GM12878 (cell line): ENCODE measurements at regions of chrX and their contacts with region 1.

Region 1: GRCh38 chrX:54439967-54440871 is at the start of gene TSR2:
- DNase-seq: peak; percentile 60
- ATAC-seq: peak; percentile 98
- H3K4me3 ChIP-seq: peak within 1 kb of the TSS; percentile 62
- H3K27ac ChIP-seq: peak within 1 kb of the TSS; percentile 17; the same call in 1 of the 2 replicates
- H3K4me1 ChIP-seq: no peaks in the 10 kb centered on the region; the same call in 1 of the 2 replicates
- H3K27me3 ChIP-seq: no peaks in the 10 kb centered on the region
- CTCF ChIP-seq: peak in 1 of 3 experiments; percentile 15; a peak in 1 of 6 replicates
- EP300 ChIP-seq: no peak
- POLR2A ChIP-seq: peak; percentile 86
- RAD21 ChIP-seq: peak; percentile 38; the same call in 1 of the 2 replicates
- polyA plus RNA-seq, gene TSR2: 8.5 to 22.0 TPM

Region 2: DNA sequence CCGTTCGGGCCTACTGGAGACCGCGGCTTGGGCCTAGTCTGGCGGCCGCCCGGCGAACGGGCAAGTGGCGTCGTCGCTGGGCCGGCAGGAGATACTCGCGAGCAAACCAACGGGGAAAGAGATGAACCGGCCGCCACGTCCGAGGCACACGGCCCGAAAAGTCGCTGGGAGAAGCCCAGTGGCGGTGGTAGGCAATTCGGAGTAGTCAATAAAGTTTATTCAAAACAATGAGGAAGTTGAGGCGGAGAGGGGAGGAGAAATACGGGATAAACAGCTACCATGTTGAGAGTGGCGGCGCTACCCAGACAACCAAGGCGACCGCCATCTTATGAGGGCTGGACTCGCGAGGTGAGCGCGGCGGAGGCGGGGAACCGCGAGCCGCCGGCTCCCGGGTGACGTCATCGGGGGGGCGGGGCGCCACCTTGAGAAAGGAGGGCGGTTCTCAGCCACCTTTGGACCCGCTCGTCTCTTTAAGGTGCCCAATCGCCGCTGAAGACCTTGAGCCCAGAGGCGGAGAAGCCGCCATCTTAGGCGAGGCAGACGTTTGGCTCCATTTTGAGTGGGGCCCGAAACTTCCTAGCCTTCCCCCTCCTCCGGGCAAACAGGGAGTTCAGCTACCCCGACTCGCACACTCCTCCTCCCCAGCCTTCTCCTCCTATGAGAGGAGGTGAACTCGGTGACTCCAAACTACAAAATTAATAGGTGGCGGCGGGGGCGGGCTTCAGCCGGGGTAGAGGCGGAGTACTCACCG is 395.9 kb before region 1 on chrX and contains the start of gene PHF8:
- CTCF ChIA-PET with region 1: interaction called, 3 read pairs
- POLR2A ChIA-PET with region 1: no interaction called
- RAD21 ChIA-PET with region 1: interaction called, 3 read pairs
- SMC1A ChIA-PET with region 1: no interaction called
- in situ Hi-C with region 1: no loop called
- intact Hi-C with region 1: loop called (anchors 5 kb)
- DNase-seq: peak; percentile 77
- ATAC-seq: peak; percentile 91
- H3K4me3 ChIP-seq: peak within 1 kb of the TSS; percentile 80
- H3K27ac ChIP-seq: peak within 1 kb of the TSS; percentile 83
- H3K4me1 ChIP-seq: peaks cover 4% of the 10 kb centered on the region; the same call in 1 of the 2 replicates
- H3K27me3 ChIP-seq: no peaks in the 10 kb centered on the region
- CTCF ChIP-seq: no peak
- EP300 ChIP-seq: no peak
- POLR2A ChIP-seq: peak; percentile 58
- RAD21 ChIP-seq: no peak
- polyA plus RNA-seq, gene PHF8: 2.4 TPM

Region 3: GRCh38 chrX:54246866-54247265 is 193.4 kb before region 1 on chrX:
- CTCF ChIA-PET with region 1: no interaction called
- POLR2A ChIA-PET with region 1: no interaction called
- RAD21 ChIA-PET with region 1: no interaction called
- SMC1A ChIA-PET with region 1: no interaction called
- in situ Hi-C with region 1: no loop called
- intact Hi-C with region 1: no loop called
- DNase-seq: no peak
- ATAC-seq: no peak
- H3K4me3 ChIP-seq: no peak overlapping the region
- H3K27ac ChIP-seq: no peak overlapping the region
- H3K4me1 ChIP-seq: no peaks in the 10 kb centered on the region
- H3K27me3 ChIP-seq: no peaks in the 10 kb centered on the region; a peak in 1 of 4 replicates
- CTCF ChIP-seq: no peak
- EP300 ChIP-seq: no peak
- POLR2A ChIP-seq: no peak
- RAD21 ChIP-seq: no peak

Region 4: GRCh38 chrX:54427837-54428424 is 12.3 kb before region 1 on chrX:
- CTCF ChIA-PET with region 1: interaction called, 3 read pairs
- POLR2A ChIA-PET with region 1: interaction called, 10 read pairs
- RAD21 ChIA-PET with region 1: interaction called, 5 read pairs
- SMC1A ChIA-PET with region 1: interaction called, 3 read pairs
- in situ Hi-C with region 1: no loop called
- intact Hi-C with region 1: no loop called
- DNase-seq: no peak
- ATAC-seq: no peak
- H3K4me3 ChIP-seq: no peak overlapping the region
- H3K27ac ChIP-seq: no peak overlapping the region
- H3K4me1 ChIP-seq: no peaks in the 10 kb centered on the region; the same call in 1 of the 2 replicates
- H3K27me3 ChIP-seq: no peaks in the 10 kb centered on the region
- CTCF ChIP-seq: no peak
- EP300 ChIP-seq: no peak
- POLR2A ChIP-seq: no peak
- RAD21 ChIP-seq: no peak

Region 5: GRCh38 chrX:54529552-54530357 is 89.5 kb after region 1 on chrX and contains the start of gene GNL3L:
- CTCF ChIA-PET with region 1: no interaction called
- POLR2A ChIA-PET with region 1: interaction called, 4 read pairs
- RAD21 ChIA-PET with region 1: no interaction called
- SMC1A ChIA-PET with region 1: no interaction called
- in situ Hi-C with region 1: no loop called
- intact Hi-C with region 1: loop called (anchors 1 kb)
- DNase-seq: peak; percentile 49
- ATAC-seq: peak; percentile 90
- H3K4me3 ChIP-seq: peak within 1 kb of the TSS; percentile 84
- H3K27ac ChIP-seq: peak within 1 kb of the TSS; percentile 81
- H3K4me1 ChIP-seq: no peaks in the 10 kb centered on the region
- H3K27me3 ChIP-seq: no peaks in the 10 kb centered on the region
- CTCF ChIP-seq: no peak
- EP300 ChIP-seq: no peak
- POLR2A ChIP-seq: peak; percentile 82
- RAD21 ChIP-seq: no peak
- polyA plus RNA-seq, gene GNL3L: 5.8 to 14.7 TPM